ENCODE measurements at regions of chr14 and their contacts with region 1.

Region 1: DNA sequence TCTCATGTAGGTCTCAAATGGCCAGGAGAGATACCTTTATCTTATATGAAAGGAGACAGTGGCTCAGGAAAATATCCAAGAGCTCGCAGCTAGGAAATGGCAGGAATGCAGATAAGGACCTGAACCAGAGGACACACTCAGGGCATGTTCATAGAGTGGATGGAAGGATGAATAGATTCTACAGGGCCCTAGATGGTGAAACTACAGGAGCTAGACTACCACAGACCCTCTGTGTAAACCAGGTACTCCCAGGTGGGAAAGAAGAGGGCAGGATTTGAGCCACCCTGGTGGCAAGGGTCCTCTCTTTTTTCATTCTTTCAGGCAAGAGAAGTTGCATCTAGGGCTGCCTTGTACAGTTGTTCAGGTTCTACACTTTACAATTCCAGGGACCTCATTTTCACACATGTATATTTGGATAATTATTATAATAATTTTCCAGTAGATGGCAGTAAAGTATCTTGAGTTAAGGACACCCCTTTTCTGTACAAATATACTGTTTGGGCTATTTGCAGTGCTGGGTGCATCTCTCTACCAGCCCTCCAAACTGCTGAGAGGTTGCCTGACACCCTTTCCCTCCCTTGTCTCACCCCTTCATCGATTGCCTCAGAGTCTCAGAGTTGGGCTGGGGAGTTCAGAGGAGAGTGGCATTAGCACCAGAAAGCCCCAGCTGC is 10.5 kb upstream of the ZDHHC22 start:
- DNase-seq: peak in 2 of 4 experiments; percentile 19 to 39
- ATAC-seq: peak; percentile 83
- H3K4me3 ChIP-seq: no peak overlapping the region
- H3K27ac ChIP-seq: no peak overlapping the region
- H3K4me1 ChIP-seq: no peaks in the 10 kb centered on the region; a peak in 1 of 5 replicates
- H3K27me3 ChIP-seq: peaks cover 0 to 12% of the 10 kb centered on the region in 2 experiments; a peak in 1 of 5 replicates
- CTCF ChIP-seq: peak in 2 of 3 experiments; percentile 4 to 47; a peak in 2 of 6 replicates
- EP300 ChIP-seq: no peak
- POLR2A ChIP-seq: no peak
- RAD21 ChIP-seq: peak; percentile 26 to 56; a peak in 3 of 4 replicates

Region 2: DNA sequence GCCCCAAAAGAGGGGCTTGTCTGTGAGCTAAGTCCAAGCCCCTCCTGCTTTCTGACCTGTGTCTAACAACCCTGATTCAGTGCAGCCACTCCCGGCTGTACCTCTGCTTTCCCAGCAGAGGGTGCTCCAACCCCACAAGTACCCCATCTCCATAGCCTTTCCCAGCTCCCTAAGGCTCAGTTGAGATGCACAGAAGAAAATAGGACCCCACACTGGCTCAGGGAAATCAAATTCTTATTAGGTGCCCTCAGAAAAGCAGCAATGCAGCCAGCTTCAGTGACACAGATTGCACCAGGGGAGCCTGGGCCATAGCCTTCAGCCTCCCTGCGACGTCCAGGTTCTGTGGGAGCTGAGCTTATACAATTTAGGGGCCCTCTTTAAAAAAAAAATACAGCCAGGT is 276.0 kb before region 1 on chr14:
- CTCF ChIA-PET with region 1: interaction called, 4 read pairs
- POLR2A ChIA-PET with region 1: interaction called, 3 read pairs
- in situ Hi-C with region 1: no loop called
- intact Hi-C with region 1: loop called (anchors 5 kb)
- DNase-seq: peak; percentile 61 to 68 (median 62)
- ATAC-seq: peak; percentile 91
- H3K4me3 ChIP-seq: no peak overlapping the region
- H3K27ac ChIP-seq: no peak overlapping the region
- H3K4me1 ChIP-seq: no peaks in the 10 kb centered on the region
- H3K27me3 ChIP-seq: peaks cover 0 to 32% of the 10 kb centered on the region in 2 experiments; a peak in 2 of 5 replicates
- CTCF ChIP-seq: peak; percentile 77 to 89 (median 80)
- EP300 ChIP-seq: no peak
- POLR2A ChIP-seq: no peak
- RAD21 ChIP-seq: peak; percentile 92 to 95

Region 3: GRCh38 chr14:77000340-77001270 is 151.4 kb before region 1 on chr14:
- CTCF ChIA-PET with region 1: no interaction called
- POLR2A ChIA-PET with region 1: no interaction called
- in situ Hi-C with region 1: no loop called
- intact Hi-C with region 1: no loop called
- DNase-seq: no peak
- ATAC-seq: peak; percentile 74
- H3K4me3 ChIP-seq: no peak overlapping the region
- H3K27ac ChIP-seq: no peak overlapping the region
- H3K4me1 ChIP-seq: peaks cover 0 to 7% of the 10 kb centered on the region in 2 experiments; a peak in 2 of 5 replicates
- H3K27me3 ChIP-seq: no peaks in the 10 kb centered on the region; a peak in 1 of 5 replicates
- CTCF ChIP-seq: no peak
- EP300 ChIP-seq: no peak
- POLR2A ChIP-seq: no peak
- RAD21 ChIP-seq: no peak

Region 4: DNA sequence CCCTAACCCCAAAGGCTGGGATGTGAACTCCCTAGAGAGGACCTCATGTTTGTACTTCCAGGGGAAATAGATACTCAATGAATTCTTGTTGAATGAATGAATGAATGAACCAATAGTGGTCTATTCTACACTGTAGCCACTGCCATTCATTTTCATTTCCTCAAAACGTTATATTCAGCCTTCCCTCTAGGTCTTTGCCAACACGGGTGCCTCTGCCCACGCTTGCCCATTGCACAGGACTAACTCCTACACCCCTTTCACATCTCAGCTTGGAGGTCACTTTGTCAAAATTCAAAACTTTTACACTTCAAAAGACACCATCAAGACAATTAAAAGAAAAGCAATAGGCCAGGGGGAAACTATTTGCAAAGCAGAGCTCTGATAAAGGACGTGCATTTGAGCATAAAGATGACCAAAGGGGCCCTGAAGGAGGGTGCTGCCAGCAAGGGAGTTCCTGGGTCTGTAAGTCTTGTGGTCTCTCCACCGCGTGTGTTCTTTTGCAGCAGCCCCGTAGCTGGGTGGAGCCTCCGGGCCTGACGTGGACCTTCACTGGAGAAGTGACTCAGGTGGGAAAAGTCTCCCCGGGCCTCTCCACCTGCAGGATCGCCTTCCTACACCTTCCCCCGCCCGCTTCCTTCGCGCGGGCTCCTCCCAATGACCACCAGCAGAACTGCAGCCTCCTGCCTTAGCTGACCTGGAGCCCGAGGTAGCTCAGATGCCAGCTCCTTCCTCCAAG is 61.1 kb after region 1 on chr14:
- CTCF ChIA-PET with region 1: interaction called, 6 read pairs
- POLR2A ChIA-PET with region 1: no interaction called
- in situ Hi-C with region 1: no loop called
- intact Hi-C with region 1: loop called (anchors 5 kb)
- DNase-seq: peak; percentile 40 to 51 (median 44)
- ATAC-seq: peak; percentile 96
- H3K4me3 ChIP-seq: no peak overlapping the region
- H3K27ac ChIP-seq: no peak overlapping the region
- H3K4me1 ChIP-seq: no peaks in the 10 kb centered on the region
- H3K27me3 ChIP-seq: peaks cover 0 to 16% of the 10 kb centered on the region in 2 experiments; a peak in 3 of 5 replicates
- CTCF ChIP-seq: peak; percentile 58 to 72 (median 68)
- EP300 ChIP-seq: no peak
- POLR2A ChIP-seq: no peak
- RAD21 ChIP-seq: peak in 1 of 2 experiments; percentile 56; a peak in 2 of 4 replicates

Region 5: GRCh38 chr14:77554207-77554606 is 402.2 kb after region 1 on chr14:
- CTCF ChIA-PET with region 1: interaction called, 5 read pairs
- POLR2A ChIA-PET with region 1: no interaction called
- in situ Hi-C with region 1: no loop called
- intact Hi-C with region 1: loop called (anchors 5 kb)
- DNase-seq: no peak
- ATAC-seq: no peak
- H3K4me3 ChIP-seq: no peak overlapping the region
- H3K27ac ChIP-seq: no peak overlapping the region
- H3K4me1 ChIP-seq: no peaks in the 10 kb centered on the region
- H3K27me3 ChIP-seq: no peaks in the 10 kb centered on the region
- CTCF ChIP-seq: no peak
- EP300 ChIP-seq: no peak
- POLR2A ChIP-seq: no peak
- RAD21 ChIP-seq: no peak